Activated CD4-positive, alpha-beta T cell treated with anti-CD3 and anti-CD28 coated beads, Interleukin-2, amount 10 ng/mL, durations not matched to agents 7 days and 5 days (primary cell): ENCODE measurements at regions of chr2 and their contacts with region 1.

Region 1: DNA sequence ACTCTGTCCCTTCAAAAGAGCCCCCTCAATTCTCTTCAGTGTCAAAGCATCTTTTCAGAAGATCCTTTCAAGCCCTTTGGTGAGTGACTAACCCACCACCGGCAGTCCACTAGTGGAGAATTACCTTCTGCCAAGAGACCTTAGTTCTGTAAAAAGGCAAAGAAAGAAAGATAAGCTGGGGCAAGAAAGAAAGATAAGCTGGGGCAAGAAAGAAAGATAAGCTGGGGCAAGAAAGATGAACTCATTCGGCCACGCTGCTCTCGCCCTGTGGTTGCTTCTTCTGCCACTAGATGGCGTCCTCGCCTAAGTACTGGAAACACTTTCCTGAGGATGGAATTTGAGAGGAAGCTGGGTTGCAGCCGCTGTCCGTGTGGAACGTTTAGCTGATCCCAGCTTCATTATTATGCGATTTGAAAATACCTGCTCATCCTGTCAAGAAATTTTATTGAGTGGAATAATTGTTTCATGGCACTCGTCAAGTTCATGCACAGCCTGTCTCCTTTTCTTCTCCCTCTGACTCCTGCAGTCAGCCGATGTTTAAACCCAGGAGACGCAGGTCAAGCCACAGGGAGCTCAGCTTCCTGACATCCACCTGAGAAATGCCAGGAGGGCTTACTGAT is 17.3 kb upstream of the ANXA4 start:
- DNase-seq: peak; percentile 89
- H3K4me3 Mint-ChIP-seq: peak overlapping the region; percentile 58
- H3K27ac Mint-ChIP-seq: no peak overlapping the region
- H3K4me1 Mint-ChIP-seq: peaks cover 7% of the 10 kb centered on the region
- H3K27me3 Mint-ChIP-seq: peaks cover 4% of the 10 kb centered on the region

Region 2: DNA sequence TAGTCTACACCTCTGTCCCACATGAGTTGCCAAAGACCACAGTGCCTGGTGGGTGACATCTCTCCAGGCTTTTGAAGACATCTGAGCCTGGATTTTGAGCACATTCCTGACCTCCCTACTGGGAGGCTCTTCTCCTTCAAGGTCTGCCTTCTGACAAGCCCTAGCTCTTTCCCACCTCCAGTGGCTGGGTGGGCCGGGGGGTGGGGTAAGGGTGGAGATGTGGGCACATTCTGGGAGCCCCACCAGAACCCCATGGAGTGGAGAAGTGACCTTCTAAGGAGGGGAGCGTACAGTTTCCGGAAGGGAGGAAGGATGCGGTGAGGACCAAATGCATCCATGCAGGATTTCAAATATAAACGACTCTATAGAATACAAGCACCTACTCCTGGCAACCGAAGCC is 10.6 kb before region 1 on chr2:
- CTCF ChIA-PET with region 1: interaction called, 16 read pairs
- POLR2A ChIA-PET with region 1: no interaction called
- DNase-seq: no peak
- H3K4me3 Mint-ChIP-seq: no peak overlapping the region
- H3K27ac Mint-ChIP-seq: no peak overlapping the region
- H3K4me1 Mint-ChIP-seq: peaks cover 23% of the 10 kb centered on the region
- H3K27me3 Mint-ChIP-seq: no peaks in the 10 kb centered on the region

Region 3: DNA sequence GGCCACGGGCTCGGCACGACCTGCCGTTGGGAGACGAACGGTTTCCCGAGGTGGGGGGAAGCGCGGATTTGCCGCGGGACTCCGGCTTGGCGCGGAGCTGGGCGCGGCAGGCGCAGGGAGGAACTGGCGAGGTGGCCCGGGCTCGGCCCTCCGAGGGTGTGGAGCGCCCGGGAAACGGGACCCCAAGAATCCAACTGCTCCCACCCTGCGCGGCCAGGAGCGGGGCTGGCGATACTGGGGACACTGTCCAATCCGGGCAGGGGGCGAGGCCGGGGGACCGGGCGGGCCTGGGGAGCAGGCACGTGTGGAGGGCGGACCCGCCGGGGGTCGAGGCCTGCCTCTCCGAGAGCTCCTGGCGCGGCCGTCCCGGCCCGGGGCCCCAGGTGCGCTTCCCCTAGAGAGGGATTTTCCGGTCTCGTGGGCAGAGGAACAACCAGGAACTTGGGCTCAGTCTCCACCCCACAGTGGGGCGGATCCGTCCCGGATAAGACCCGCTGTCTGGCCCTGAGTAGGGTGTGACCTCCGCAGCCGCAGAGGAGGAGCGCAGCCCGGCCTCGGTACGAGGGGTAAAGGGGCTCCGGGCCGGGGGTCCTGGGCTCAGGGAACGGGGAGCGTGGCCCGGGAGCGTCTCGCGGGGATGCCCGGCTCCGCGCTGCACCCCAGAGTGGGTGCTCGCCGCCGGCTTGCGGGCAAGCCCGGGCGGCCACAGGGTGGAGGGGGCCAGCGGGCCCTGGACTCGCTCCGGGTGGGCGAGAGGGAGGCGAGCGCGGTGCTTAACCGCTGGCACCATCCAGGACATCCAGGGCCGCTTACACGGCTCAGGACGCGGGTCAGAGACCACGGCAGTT is 17.2 kb after region 1 on chr2 and contains the start of gene ANXA4:
- CTCF ChIA-PET with region 1: interaction called, 31 read pairs
- POLR2A ChIA-PET with region 1: no interaction called
- DNase-seq: peak; percentile 71
- H3K4me3 Mint-ChIP-seq: peak within 1 kb of the TSS; percentile 94
- H3K27ac Mint-ChIP-seq: peak within 1 kb of the TSS; percentile 95
- H3K4me1 Mint-ChIP-seq: peaks cover 33% of the 10 kb centered on the region
- H3K27me3 Mint-ChIP-seq: peaks cover 19% of the 10 kb centered on the region
- total RNA-seq, gene ANXA4: 70.6 to 75.9 TPM

Region 4: GRCh38 chr2:69762513-69763497 is 38.2 kb after region 1 on chr2:
- CTCF ChIA-PET with region 1: interaction called, 12 read pairs
- POLR2A ChIA-PET with region 1: no interaction called
- DNase-seq: no peak
- H3K4me3 Mint-ChIP-seq: no peak overlapping the region
- H3K27ac Mint-ChIP-seq: peak overlapping the region; percentile 58
- H3K4me1 Mint-ChIP-seq: peaks cover 47% of the 10 kb centered on the region
- H3K27me3 Mint-ChIP-seq: no peaks in the 10 kb centered on the region

Region 5: DNA sequence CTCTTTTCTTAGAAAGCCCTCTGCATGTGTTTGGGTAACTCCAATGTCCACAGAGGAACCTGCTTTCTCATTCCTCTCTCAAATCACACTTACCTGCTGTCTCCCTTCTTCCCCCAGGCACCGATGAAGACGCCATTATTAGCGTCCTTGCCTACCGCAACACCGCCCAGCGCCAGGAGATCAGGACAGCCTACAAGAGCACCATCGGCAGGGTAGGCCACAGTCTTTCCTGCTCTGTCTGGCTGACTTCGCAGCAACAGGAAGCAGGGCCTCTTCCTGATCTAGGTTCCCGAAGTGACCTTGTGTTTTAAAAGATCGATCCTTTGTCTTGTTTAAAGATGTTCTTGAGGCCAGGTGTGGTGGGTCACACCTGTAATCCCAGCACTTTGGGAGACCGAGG is 79.8 kb after region 1 on chr2:
- CTCF ChIA-PET with region 1: interaction called, 13 read pairs
- POLR2A ChIA-PET with region 1: interaction called, 3 read pairs
- DNase-seq: no peak
- H3K4me3 Mint-ChIP-seq: no peak overlapping the region
- H3K27ac Mint-ChIP-seq: peak overlapping the region; percentile 67
- H3K4me1 Mint-ChIP-seq: peaks cover 22% of the 10 kb centered on the region
- H3K27me3 Mint-ChIP-seq: no peaks in the 10 kb centered on the region

Region 6: GRCh38 chr2:69811018-69811417 is 86.4 kb after region 1 on chr2:
- CTCF ChIA-PET with region 1: interaction called, 78 read pairs
- POLR2A ChIA-PET with region 1: interaction called, 3 read pairs
- DNase-seq: no peak
- H3K4me3 Mint-ChIP-seq: no peak overlapping the region
- H3K27ac Mint-ChIP-seq: no peak overlapping the region
- H3K4me1 Mint-ChIP-seq: no peaks in the 10 kb centered on the region
- H3K27me3 Mint-ChIP-seq: no peaks in the 10 kb centered on the region

Region 7: DNA sequence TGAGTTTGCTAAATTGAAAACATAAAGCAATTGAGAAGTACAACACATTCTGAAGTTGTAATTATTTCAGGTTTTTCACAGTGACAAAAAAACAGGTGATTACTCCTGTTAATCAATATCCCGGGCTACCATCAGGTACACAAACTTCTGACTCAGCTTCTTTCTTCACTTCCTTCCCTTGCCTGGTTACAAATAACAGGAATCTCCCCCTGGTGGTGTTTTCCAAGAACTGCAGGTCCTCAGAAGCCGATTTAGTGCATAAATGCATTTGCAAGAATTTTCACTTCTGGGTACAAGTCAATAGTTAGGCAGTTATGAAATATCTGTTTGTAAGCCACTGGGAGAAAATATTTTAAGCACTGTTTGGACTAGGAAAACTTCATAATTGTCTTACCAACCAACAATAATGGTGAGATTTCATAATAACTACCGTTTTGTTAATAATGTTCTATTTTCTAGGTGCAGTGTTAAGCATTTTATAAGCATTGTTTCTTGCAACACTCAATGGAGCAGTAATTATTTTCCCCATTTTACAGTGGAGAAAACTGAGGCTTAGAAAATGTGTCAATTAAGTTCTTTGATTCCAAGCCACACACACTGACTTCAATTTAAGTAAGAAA is 92.4 kb after region 1 on chr2:
- CTCF ChIA-PET with region 1: interaction called, 78 read pairs
- POLR2A ChIA-PET with region 1: no interaction called
- DNase-seq: peak; percentile 85
- H3K4me3 Mint-ChIP-seq: no peak overlapping the region
- H3K27ac Mint-ChIP-seq: no peak overlapping the region
- H3K4me1 Mint-ChIP-seq: peaks cover 8% of the 10 kb centered on the region
- H3K27me3 Mint-ChIP-seq: no peaks in the 10 kb centered on the region